Transverse colon (tissue), 4 donors: ENCODE measurements at regions of chr14 and their contacts with region 1.

Region 1: DNA sequence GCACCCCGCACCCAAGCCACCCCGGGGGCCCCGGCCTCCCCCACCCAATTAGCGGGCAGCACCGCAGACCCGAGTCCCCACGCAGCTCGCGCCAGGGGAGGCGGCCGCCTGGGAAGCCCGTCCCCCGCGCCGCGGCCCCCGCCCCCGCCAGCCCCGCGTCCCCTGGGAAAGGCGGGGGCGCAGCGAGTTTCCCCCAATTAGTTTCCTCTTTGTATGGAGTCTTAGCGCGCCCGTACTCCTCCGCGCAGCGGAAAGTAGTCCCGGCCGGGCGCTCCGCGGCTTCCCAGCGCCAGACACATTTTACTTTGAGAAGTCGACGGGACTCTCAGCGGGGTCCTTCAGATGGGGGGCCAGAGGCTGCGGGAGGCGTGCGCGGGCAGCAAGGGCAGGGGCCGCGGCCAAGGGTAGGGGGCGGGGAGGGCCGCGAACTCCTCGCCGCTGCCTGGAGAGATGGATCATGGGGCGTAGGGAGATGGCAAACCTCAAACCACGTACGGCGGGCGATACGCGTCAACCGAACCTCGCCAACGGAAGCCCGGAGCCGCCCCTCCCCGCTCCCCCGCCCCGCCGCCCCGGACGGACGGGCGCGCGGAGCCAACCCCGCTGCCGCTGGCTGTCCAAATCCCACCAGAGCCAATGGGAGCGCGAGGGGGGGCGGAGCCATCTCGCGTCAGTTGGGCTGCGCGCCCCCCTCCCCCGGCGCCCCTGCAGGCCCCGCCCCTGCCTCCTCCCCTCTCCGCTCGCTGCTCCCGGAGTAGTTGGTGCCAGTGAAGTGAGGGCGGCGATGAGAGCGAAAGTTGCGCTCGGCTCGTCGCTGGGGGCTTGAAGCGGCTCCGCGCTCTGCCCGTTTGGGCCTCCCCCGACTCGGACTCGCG is at the start of gene RCOR1:
- DNase-seq: peak; percentile 99
- H3K4me3 ChIP-seq: peak within 1 kb of the TSS; percentile 80 to 97 (median 86)
- H3K27ac ChIP-seq: peak within 1 kb of the TSS; percentile 93 to 98 (median 96)
- H3K4me1 ChIP-seq: peaks cover 8 to 28% (median 23%) of the 10 kb centered on the region in 4 donors
- H3K27me3 ChIP-seq: no peaks in the 10 kb centered on the region
- CTCF ChIP-seq: peak in 1 of 5 experiments; percentile 10
- EP300 ChIP-seq: no peak
- POLR2A ChIP-seq: peak; percentile 74
- total RNA-seq, gene RCOR1: 15.7 to 31.0 (median 25.8) TPM

Region 2: GRCh38 chr14:102249041-102249440 is 343.1 kb before region 1 on chr14:
- in situ Hi-C with region 1: no loop called
- intact Hi-C with region 1: no loop called
- DNase-seq: no peak
- H3K4me3 ChIP-seq: no peak overlapping the region
- H3K27ac ChIP-seq: no peak overlapping the region
- H3K4me1 ChIP-seq: no peaks in the 10 kb centered on the region
- H3K27me3 ChIP-seq: no peaks in the 10 kb centered on the region
- CTCF ChIP-seq: no peak
- EP300 ChIP-seq: no peak
- POLR2A ChIP-seq: no peak

Region 3: GRCh38 chr14:102524466-102525218 is 67.5 kb before region 1 on chr14:
- in situ Hi-C with region 1: loop called in 1 of 4 experiments (anchors 10 kb)
- intact Hi-C with region 1: loop called (anchors 2 kb)
- DNase-seq: peak; percentile 100
- H3K4me3 ChIP-seq: peak overlapping the region; percentile 35 to 63 (median 42)
- H3K27ac ChIP-seq: peak overlapping the region; percentile 87 to 94 (median 89)
- H3K4me1 ChIP-seq: peaks cover 17 to 33% (median 29%) of the 10 kb centered on the region in 4 donors
- H3K27me3 ChIP-seq: no peaks in the 10 kb centered on the region
- CTCF ChIP-seq: peak; percentile 98 to 100 (median 100)
- EP300 ChIP-seq: no peak
- POLR2A ChIP-seq: peak; percentile 90